ENCODE measurements at regions of chr2 and their contacts with region 1.

Region 1: GRCh38 chr2:98944775-98945174 is 8.8 kb upstream of the CRACDL start:
- DNase-seq: no peak
- H3K4me3 ChIP-seq: no peak overlapping the region
- H3K27me3 ChIP-seq: peaks cover 7% of the 10 kb centered on the region
- CTCF ChIP-seq: no peak

Region 2: DNA sequence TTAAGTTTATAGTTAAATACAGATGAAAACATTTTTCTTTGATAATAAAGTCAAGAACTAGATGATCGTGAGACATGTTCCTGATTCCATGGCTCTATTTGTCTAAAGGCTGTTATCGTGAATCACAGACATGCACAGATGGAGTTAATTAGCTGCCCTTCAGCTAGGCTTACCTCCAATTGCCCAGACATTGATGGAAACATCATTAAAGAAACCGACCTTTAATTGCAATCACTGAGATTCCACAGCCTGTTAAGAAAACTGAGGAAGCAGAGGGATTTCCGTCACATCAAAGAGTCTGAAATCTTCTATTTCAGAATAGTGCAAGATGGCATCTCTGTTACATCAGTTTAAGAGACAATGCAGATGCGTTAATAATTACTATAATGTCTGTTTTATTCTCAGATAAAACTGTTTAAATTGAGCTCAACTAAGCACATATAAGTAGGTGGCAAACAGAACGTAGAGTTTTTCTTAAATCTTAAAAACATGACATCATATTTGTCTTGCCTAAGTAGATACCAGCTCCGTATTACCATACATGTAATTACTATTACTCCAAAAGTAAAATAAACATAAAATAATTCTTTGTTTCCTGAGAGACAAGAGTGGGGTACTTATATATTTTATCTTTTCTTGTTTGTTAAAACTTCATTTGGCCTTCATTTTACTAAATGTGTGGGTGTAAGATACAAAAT is 15.2 kb after region 1 on chr2:
- CTCF ChIA-PET with region 1: no interaction called
- POLR2A ChIA-PET with region 1: no interaction called
- DNase-seq: no peak
- H3K4me3 ChIP-seq: no peak overlapping the region
- H3K27me3 ChIP-seq: no peaks in the 10 kb centered on the region
- CTCF ChIP-seq: no peak

Region 3: DNA sequence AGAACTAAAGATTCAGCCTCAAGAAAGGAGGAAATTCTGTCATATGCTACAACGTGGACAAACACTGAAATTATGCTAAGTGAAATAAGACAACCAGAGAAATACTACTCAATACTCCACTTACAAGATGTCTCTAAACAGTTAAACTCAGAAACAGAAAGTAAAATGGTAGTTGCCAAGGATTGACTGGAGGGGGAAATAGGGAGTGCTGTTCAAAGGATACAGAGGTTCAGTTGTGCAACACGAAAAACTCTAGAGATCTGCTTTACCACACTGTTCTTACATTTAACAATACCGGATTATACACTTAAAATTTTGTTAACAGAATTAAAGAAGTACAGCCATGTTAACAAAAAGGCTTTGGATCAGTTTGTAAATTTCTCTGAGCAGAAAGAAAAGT is 156.9 kb after region 1 on chr2:
- CTCF ChIA-PET with region 1: no interaction called
- POLR2A ChIA-PET with region 1: interaction called, 14 read pairs
- DNase-seq: no peak
- H3K4me3 ChIP-seq: no peak overlapping the region
- H3K27me3 ChIP-seq: no peaks in the 10 kb centered on the region
- CTCF ChIP-seq: no peak; the same call in 1 of the 2 replicates

Region 4: GRCh38 chr2:99662761-99663341 is 718.1 kb after region 1 on chr2:
- CTCF ChIA-PET with region 1: no interaction called
- POLR2A ChIA-PET with region 1: no interaction called
- DNase-seq: peak; percentile 99
- H3K4me3 ChIP-seq: no peak overlapping the region
- H3K27me3 ChIP-seq: no peaks in the 10 kb centered on the region
- CTCF ChIP-seq: no peak

Measured in BJ (cell line).